CD14-positive monocyte (primary cell): ENCODE measurements at regions of chr9 and their contacts with region 1.

Region 1: DNA sequence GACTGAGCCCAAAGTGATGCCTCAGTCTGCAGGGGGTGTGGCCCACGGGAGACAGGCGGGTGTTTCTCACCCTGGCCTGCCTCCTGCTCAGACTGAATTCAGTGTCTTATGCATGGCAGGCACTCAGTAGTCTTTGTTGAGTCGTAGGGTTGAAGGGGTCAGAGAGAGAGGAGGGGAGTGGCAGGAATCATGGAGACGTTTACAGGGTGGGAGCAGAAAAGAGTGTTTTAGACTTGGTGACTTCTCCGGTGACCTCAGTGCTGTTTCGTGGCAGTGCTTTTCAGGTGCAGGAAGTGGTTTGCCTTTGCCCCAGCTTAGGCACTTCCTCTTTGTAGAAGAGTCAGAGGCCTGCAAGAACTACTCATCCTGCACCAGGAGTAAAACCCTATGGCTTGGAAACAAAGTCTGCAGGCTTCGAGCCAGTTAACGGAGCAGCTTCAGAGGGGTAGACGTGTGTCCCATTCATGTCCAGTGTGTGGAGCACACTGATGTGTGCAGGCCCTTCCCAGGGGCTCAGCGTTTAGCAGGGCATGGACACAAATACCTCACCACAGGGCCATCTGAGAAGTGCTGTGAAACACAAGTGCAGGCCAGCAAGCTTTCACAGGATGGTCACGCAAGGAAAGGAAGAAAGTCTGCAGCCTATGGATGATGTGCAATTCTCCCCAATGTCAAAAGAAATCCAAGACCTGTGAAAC is 24.5 kb upstream of the SEMA4D start:
- DNase-seq: peak; percentile 90 to 94 (median 92)
- H3K4me3 ChIP-seq: peak overlapping the region in 1 of 3 experiments; percentile 38
- H3K4me3 Mint-ChIP-seq: peak overlapping the region; percentile 41 to 86
- H3K27ac ChIP-seq: peak overlapping the region; percentile 59 to 94
- H3K27ac Mint-ChIP-seq: peak overlapping the region; percentile 93 to 98 (median 98)
- H3K4me1 ChIP-seq: peaks cover 91 to 95% of the 10 kb centered on the region in 2 donors
- H3K4me1 Mint-ChIP-seq: peaks cover 90% of the 10 kb centered on the region
- H3K27me3 ChIP-seq: no peaks in the 10 kb centered on the region
- H3K27me3 Mint-ChIP-seq: no peaks in the 10 kb centered on the region
- CTCF ChIP-seq: no peak

Region 2: GRCh38 chr9:89318123-89319014 is 204.0 kb before region 1 on chr9 and contains the start of gene SECISBP2:
- intact Hi-C with region 1: loop called in 1 of 2 experiments (anchors 10 kb)
- DNase-seq: peak; percentile 91 to 96 (median 95)
- H3K4me3 ChIP-seq: peak within 1 kb of the TSS; percentile 54 to 77 (median 76)
- H3K4me3 Mint-ChIP-seq: peak within 1 kb of the TSS; percentile 86 to 92
- H3K27ac ChIP-seq: peak within 1 kb of the TSS; percentile 96
- H3K27ac Mint-ChIP-seq: peak within 1 kb of the TSS; percentile 97 to 98 (median 98)
- H3K4me1 ChIP-seq: peaks cover 31 to 45% of the 10 kb centered on the region in 2 donors
- H3K4me1 Mint-ChIP-seq: peaks cover 53% of the 10 kb centered on the region
- H3K27me3 ChIP-seq: no peaks in the 10 kb centered on the region
- H3K27me3 Mint-ChIP-seq: no peaks in the 10 kb centered on the region
- CTCF ChIP-seq: peak; percentile 79
- polyA plus RNA-seq, gene SECISBP2: 8.6 to 51.4 (median 9.8) TPM

Region 3: DNA sequence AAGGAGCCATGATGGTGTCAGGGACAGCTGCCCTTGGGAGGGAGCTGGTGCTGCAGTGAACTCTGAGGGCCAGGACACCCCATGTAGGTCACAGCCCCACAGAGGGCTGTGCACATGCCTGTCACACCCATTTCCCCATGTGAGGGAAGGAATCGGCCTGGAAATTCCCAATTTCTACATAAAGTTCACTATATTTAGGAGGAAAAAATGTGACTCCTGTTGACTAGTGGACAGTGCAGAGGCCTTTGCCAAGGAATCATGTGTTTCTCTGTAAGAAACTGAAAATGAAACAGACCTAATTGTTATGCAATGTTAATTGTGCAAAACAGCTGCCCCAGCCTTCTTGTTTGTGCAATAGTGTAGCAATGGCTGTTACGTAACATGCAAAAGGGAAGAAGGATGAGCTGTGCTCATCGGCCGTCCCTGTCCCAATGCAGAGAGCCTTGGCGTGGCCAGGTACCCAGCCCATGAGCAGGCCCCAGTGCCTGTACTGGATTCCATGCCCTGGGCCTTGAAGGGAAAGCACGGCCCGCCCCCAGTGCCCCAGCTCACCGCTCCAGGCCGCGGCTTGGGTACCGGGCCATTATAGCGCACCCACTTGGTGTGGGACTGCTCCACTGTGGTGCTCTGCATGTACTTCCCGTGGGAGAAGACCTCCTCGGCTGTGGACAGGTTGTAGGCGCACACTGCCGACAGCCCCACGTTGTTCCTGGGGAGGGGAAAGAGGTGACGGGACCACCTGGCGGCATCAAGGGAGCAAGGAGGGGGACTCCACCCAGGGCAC is 134.1 kb before region 1 on chr9:
- intact Hi-C with region 1: loop called in 1 of 2 experiments (anchors 10 kb)
- DNase-seq: peak; percentile 96 to 98 (median 97)
- H3K4me3 ChIP-seq: peak overlapping the region in 1 of 3 experiments; percentile 31
- H3K4me3 Mint-ChIP-seq: no peak overlapping the region
- H3K27ac ChIP-seq: peak overlapping the region; percentile 85
- H3K27ac Mint-ChIP-seq: peak overlapping the region; percentile 84 to 96 (median 94)
- H3K4me1 ChIP-seq: peaks cover 28 to 50% of the 10 kb centered on the region in 2 donors
- H3K4me1 Mint-ChIP-seq: peaks cover 56% of the 10 kb centered on the region
- H3K27me3 ChIP-seq: no peaks in the 10 kb centered on the region
- H3K27me3 Mint-ChIP-seq: peaks cover 0 to 1% (median 0%) of the 10 kb centered on the region in 3 donors
- CTCF ChIP-seq: no peak

Region 4: GRCh38 chr9:89442981-89443814 is 79.2 kb before region 1 on chr9:
- intact Hi-C with region 1: loop called in 1 of 2 experiments (anchors 5 kb)
- DNase-seq: peak; percentile 82 to 90 (median 85)
- H3K4me3 ChIP-seq: no peak overlapping the region
- H3K4me3 Mint-ChIP-seq: peak overlapping the region; percentile 39 to 41
- H3K27ac ChIP-seq: peak overlapping the region; percentile 89 to 95
- H3K27ac Mint-ChIP-seq: peak overlapping the region; percentile 85 to 97 (median 96)
- H3K4me1 ChIP-seq: peaks cover 50 to 54% of the 10 kb centered on the region in 2 donors
- H3K4me1 Mint-ChIP-seq: peaks cover 71% of the 10 kb centered on the region
- H3K27me3 ChIP-seq: no peaks in the 10 kb centered on the region
- H3K27me3 Mint-ChIP-seq: peaks cover 0 to 2% (median 0%) of the 10 kb centered on the region in 3 donors
- CTCF ChIP-seq: no peak

Region 5: GRCh38 chr9:89466451-89467277 is 55.7 kb before region 1 on chr9:
- intact Hi-C with region 1: no loop called
- DNase-seq: no peak
- H3K4me3 ChIP-seq: no peak overlapping the region
- H3K4me3 Mint-ChIP-seq: no peak overlapping the region
- H3K27ac ChIP-seq: peak overlapping the region in 1 of 2 donors; percentile 80
- H3K27ac Mint-ChIP-seq: peak overlapping the region in 5 of 7 donors; percentile 24 to 86 (median 70)
- H3K4me1 ChIP-seq: peaks cover 76 to 89% of the 10 kb centered on the region in 2 donors
- H3K4me1 Mint-ChIP-seq: peaks cover 93% of the 10 kb centered on the region
- H3K27me3 ChIP-seq: no peaks in the 10 kb centered on the region
- H3K27me3 Mint-ChIP-seq: no peaks in the 10 kb centered on the region
- CTCF ChIP-seq: no peak

Region 6: DNA sequence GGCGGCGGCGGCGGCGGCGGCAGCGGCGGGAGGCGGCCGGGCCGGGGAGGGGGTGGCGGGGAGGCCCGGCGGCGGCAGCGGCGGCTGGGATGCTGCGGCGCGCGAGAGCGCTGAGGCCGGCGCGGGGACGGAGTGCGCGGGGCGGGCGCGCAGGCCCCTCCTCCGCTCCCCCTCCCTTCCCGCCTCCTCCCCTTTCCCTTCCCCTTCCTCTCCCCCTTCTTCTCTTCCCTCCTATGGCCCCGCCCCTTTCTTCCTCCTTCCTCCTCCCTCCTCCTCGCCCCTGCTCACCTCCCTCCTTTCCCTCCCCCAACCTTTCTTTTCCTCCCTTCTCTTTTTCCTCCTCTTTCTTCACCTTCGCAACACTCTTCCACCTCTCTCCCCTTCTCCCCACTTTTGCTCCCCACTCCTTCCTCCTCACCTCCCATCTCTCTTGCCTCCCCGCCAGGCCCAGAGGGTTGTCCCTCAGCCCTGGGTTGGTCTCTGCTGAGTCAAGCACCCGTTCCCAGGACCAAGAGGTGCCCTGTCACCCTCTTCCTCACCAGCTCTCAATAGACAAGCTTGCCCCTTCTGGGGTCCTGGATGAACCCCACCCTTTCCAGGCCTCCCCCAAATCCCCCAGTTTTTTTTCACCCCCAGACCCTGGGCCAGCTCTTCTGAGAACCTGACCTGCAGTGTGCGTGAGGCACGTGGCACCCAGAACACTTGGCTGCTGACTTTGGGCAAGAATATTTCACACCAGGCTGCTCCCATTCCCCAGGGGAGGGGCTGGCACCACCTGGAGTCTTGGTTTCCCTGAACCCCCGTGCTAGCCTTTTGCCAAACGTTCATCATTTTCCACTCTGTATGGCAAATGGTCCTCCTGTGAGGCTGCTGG is 24.2 kb before region 1 on chr9 and contains the start of gene SEMA4D:
- intact Hi-C with region 1: loop called in 1 of 2 experiments (anchors 2 kb)
- DNase-seq: peak; percentile 61 to 79 (median 74)
- H3K4me3 ChIP-seq: peak within 1 kb of the TSS; percentile 82 to 91 (median 82)
- H3K4me3 Mint-ChIP-seq: peak within 1 kb of the TSS; percentile 94 to 97
- H3K27ac ChIP-seq: peak within 1 kb of the TSS; percentile 79 to 82
- H3K27ac Mint-ChIP-seq: peak within 1 kb of the TSS; percentile 75 to 97 (median 90)
- H3K4me1 ChIP-seq: peaks cover 58% of the 10 kb centered on the region in 2 donors
- H3K4me1 Mint-ChIP-seq: peaks cover 67% of the 10 kb centered on the region
- H3K27me3 ChIP-seq: no peaks in the 10 kb centered on the region
- H3K27me3 Mint-ChIP-seq: peaks cover 0 to 4% (median 1%) of the 10 kb centered on the region in 3 donors
- CTCF ChIP-seq: no peak
- polyA plus RNA-seq, gene SEMA4D: 28.2 to 117 (median 28.6) TPM